ENCODE measurements at regions of chr11 and their contacts with region 1.

Region 1: GRCh38 chr11:93921695-93922468 is 71.5 kb upstream of the VSTM5 start:
- DNase-seq: peak; percentile 21
- H3K4me3 ChIP-seq: no peak overlapping the region
- H3K27ac ChIP-seq: no peak overlapping the region
- H3K27me3 ChIP-seq: no peaks in the 10 kb centered on the region
- CTCF ChIP-seq: peak; percentile 88

Region 2: GRCh38 chr11:93564895-93565294 is 357.0 kb before region 1 on chr11:
- CTCF ChIA-PET with region 1: no interaction called
- POLR2A ChIA-PET with region 1: no interaction called
- DNase-seq: no peak
- H3K4me3 ChIP-seq: no peak overlapping the region
- H3K27ac ChIP-seq: no peak overlapping the region
- H3K27me3 ChIP-seq: peaks cover 4% of the 10 kb centered on the region
- CTCF ChIP-seq: no peak

Region 3: GRCh38 chr11:93773045-93773477 is 148.8 kb before region 1 on chr11:
- CTCF ChIA-PET with region 1: no interaction called
- POLR2A ChIA-PET with region 1: no interaction called
- DNase-seq: no peak
- H3K4me3 ChIP-seq: no peak overlapping the region
- H3K27ac ChIP-seq: no peak overlapping the region
- H3K27me3 ChIP-seq: no peaks in the 10 kb centered on the region
- CTCF ChIP-seq: no peak

Region 4: GRCh38 chr11:93849751-93850593 is 71.9 kb before region 1 on chr11:
- CTCF ChIA-PET with region 1: no interaction called
- POLR2A ChIA-PET with region 1: no interaction called
- DNase-seq: no peak
- H3K4me3 ChIP-seq: peak overlapping the region; percentile 45
- H3K27ac ChIP-seq: no peak overlapping the region
- H3K27me3 ChIP-seq: no peaks in the 10 kb centered on the region
- CTCF ChIP-seq: peak; percentile 16; the same call in 1 of the 2 replicates

Region 5: GRCh38 chr11:93908689-93909088 is 13.2 kb before region 1 on chr11:
- CTCF ChIA-PET with region 1: interaction called, 29 read pairs
- POLR2A ChIA-PET with region 1: no interaction called
- DNase-seq: peak; percentile 78
- H3K4me3 ChIP-seq: no peak overlapping the region
- H3K27ac ChIP-seq: peak overlapping the region; percentile 84
- H3K27me3 ChIP-seq: no peaks in the 10 kb centered on the region
- CTCF ChIP-seq: no peak

Region 6: DNA sequence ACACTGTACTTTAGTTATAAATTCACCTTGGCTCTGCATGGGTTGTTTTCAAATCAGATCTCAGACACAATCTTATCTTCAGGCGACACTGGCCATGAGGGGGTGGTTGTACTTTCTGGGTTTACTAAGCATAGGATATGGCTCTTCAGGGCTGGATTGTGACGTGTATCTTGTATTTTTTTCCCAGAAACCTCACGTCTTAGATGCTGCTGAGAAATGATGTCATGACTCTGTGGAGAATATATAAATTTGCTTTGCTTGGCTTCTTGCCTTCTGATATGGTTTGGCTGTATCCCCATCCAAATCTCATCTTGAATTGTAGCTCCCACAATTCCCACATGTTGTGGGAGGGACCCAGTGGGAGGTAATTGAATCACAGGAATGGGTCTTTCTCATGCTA is 11.3 kb after region 1 on chr11:
- CTCF ChIA-PET with region 1: interaction called, 23 read pairs
- POLR2A ChIA-PET with region 1: no interaction called
- DNase-seq: no peak
- H3K4me3 ChIP-seq: no peak overlapping the region
- H3K27ac ChIP-seq: no peak overlapping the region
- H3K27me3 ChIP-seq: no peaks in the 10 kb centered on the region
- CTCF ChIP-seq: no peak

Region 7: DNA sequence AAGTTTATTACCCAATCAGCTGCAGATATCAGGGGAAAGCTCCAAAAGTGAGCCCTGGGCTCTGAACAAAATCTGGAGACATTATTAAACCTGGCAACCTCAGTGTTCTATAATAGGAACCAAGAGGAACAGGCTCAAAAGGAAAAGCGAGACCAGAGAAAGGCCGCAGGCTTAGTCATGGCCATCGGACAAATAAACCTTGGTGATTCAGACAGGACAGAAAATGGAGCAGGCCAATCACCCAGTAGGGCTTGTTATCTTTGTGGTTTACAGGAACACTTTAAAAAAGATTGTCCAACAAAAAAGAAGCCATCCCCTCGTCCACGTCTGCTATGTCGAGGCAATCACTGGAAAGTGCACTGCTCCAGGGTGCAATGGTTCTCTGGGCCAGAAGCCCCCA is 199.1 kb after region 1 on chr11:
- CTCF ChIA-PET with region 1: no interaction called
- POLR2A ChIA-PET with region 1: no interaction called
- DNase-seq: peak; percentile 54
- H3K4me3 ChIP-seq: no peak overlapping the region
- H3K27ac ChIP-seq: peak overlapping the region; percentile 52
- H3K27me3 ChIP-seq: no peaks in the 10 kb centered on the region
- CTCF ChIP-seq: no peak

Region 8: DNA sequence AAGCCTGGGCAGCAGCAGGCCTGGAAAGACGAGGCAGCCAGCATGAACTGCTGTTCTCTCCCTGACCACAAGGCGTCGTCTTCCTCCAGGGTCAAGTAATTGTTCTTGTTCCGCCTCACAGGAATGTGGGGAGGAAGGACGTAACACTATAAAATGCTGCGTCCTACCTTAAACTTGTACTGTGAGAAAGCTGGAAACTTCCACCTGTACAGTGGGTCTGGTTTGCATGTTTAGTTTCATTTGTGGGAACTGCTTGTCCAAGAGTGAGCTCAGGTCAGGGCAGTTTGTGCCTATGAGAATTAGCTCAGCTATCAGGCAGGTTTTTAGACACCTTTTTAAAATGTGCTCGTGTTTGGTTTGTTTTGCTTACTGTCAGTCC is 262.0 kb after region 1 on chr11:
- CTCF ChIA-PET with region 1: interaction called, 36 read pairs
- POLR2A ChIA-PET with region 1: no interaction called
- DNase-seq: no peak
- H3K4me3 ChIP-seq: no peak overlapping the region
- H3K27ac ChIP-seq: no peak overlapping the region
- H3K27me3 ChIP-seq: no peaks in the 10 kb centered on the region
- CTCF ChIP-seq: peak; percentile 76

Region 9: GRCh38 chr11:94201004-94201465 is 279.2 kb after region 1 on chr11:
- CTCF ChIA-PET with region 1: interaction called, 10 read pairs
- POLR2A ChIA-PET with region 1: no interaction called
- DNase-seq: peak; percentile 76
- H3K4me3 ChIP-seq: no peak overlapping the region
- H3K27ac ChIP-seq: peak overlapping the region; percentile 82
- H3K27me3 ChIP-seq: no peaks in the 10 kb centered on the region
- CTCF ChIP-seq: no peak

Region 10: DNA sequence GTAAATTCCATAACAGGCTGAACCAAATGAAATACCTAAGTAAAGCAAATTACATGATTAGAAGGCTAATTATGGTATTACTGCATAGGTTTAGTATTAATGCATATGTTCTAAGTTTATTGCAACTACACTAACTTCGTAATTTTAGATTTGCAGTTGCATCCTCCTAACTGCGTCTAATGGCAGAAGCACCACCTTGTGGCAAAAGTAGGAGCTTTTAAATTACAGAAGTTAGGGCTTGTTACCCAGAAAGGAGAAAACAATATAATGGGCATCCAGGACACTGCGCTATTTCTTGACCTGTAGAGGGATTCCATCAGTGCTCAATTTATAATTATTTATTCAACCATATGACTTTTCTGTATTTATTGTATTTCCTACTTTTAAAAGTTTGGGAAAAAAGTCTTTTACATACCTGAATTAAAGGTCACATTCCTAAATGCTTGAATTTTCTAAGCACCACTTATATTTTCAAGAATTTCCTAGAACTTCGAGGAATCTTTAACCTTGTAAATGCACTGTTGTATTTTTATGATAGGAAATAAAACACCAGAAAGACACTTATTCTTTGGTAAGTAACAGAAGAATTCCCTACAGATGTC is 495.6 kb after region 1 on chr11:
- CTCF ChIA-PET with region 1: interaction called, 25 read pairs
- POLR2A ChIA-PET with region 1: no interaction called
- DNase-seq: peak; percentile 38
- H3K4me3 ChIP-seq: no peak overlapping the region
- H3K27ac ChIP-seq: no peak overlapping the region
- H3K27me3 ChIP-seq: no peaks in the 10 kb centered on the region
- CTCF ChIP-seq: peak; percentile 77

Region 11: DNA sequence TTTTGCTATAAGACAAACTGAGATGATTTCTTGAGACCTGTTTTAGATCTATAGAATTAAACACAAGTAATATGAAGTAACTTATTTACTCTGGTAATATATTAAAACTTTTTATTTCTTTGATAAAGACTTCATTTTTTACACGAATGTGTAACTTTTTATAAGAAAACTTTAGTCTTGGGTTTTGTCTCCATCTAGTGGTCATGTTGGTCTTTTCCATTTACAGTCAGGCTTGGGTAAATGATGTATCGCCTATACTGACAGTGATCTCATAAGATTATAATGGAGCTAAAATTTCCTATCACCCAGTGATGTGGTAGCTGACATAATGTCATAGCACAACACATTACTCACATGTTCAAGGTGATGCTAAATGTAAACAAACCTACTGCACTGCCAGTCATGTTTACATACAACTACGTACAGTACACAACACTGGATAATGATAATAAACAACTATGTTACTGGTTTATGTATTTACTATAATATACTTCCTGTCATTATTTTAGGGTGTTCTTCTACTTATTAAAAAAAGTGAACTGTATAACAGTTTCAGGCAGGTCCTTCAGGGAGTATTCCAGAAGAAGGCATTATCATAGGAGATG is 582.9 kb after region 1 on chr11:
- CTCF ChIA-PET with region 1: interaction called, 12 read pairs
- POLR2A ChIA-PET with region 1: no interaction called
- DNase-seq: peak; percentile 34
- H3K4me3 ChIP-seq: no peak overlapping the region
- H3K27ac ChIP-seq: no peak overlapping the region
- H3K27me3 ChIP-seq: no peaks in the 10 kb centered on the region
- CTCF ChIP-seq: peak; percentile 71

Measured in AG04450 (cell line).